Testis (tissue), 5 donors: ENCODE measurements at regions of chr19 and their contacts with region 1.

Region 1: DNA sequence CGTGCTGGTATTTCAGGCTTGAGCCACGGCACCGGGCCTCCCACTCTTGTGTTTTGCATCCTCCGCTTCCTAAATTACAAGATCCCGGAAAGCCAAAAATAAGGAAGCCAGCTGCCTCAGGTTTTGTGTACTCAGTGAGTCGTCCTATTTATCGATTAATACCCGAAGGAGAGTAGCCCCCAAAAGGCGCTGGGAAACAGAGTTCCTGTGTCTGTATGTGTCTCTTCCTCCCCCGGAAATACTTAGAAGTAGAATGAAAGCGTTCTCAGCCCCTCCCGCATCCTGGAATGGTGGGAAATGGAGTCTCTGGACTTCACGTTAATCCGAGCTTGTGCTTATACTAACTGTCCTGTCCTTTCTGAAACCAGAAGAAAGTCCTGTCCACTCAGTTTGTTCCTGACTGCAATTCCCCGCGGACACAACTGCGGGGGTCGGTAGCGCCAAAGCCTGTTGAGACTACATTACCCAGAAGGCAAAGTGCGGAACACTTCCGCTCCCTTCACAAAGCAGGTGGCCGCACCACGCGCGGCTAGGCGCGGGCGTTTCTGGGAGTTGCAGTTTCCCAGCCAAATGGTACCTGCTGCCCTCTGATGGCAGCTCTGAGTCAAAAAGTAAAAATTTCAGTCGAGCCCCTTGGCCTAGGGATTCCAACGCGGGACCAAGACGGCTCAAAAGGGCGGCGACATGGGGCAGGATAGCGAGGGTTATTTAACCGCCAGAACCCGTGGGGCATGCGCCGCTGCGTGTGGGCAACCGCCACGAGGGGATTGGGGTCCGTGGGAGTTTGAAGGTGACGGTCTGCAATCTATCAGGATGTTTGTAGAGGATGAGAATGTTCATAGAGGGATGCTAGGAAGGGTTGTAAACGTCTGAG is 2.2 kb upstream of the GSK3A start:
- DNase-seq: peak; percentile 97
- H3K4me3 ChIP-seq: peak overlapping the region; percentile 76 to 94
- H3K27ac ChIP-seq: peak overlapping the region; percentile 55 to 90
- H3K4me1 ChIP-seq: peaks cover 60% of the 10 kb centered on the region
- H3K27me3 ChIP-seq: no peaks in the 10 kb centered on the region
- CTCF ChIP-seq: peak; percentile 61 to 78 (median 67)
- POLR2A ChIP-seq: no peak

Region 2: DNA sequence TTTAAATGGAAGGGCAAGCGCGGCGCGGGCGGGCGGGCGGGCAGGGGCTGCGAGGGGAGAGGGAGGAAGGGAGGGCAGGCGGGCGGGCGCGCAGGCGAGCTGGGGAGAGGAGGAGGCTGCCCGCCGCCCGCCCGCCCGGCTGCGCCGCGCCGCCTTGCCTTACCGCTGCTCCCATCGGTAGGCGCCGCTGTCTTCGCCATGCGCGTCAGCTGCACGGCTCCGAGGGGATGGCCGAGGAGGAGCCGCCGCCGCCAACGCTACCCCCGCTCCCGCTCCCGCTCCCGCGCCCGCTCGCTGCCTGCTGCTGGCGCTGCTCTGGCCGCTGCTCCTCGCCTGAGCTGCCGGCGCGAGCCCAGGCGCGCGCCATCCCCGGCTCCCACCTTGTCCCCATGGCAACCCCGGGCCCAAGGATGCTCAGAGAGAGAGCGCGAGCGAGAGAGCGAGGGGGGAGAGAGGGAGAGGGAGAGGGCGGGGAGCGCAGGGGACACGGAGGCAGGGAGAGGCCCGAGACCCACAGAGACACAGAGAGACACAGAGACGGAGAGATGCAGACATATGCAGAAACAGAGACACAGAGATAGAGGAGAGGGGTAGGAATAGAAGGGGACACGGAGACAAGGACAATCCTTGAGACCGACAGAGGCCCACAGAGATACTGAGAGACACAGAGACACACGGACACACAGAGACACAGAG is 67.4 kb before region 1 on chr19:
- intact Hi-C with region 1: no loop called
- DNase-seq: peak; percentile 71
- H3K4me3 ChIP-seq: peak overlapping the region; percentile 39 to 41
- H3K27ac ChIP-seq: no peak overlapping the region
- H3K4me1 ChIP-seq: peaks cover 10% of the 10 kb centered on the region
- H3K27me3 ChIP-seq: no peaks in the 10 kb centered on the region
- CTCF ChIP-seq: peak in 1 of 3 experiments; percentile 32
- POLR2A ChIP-seq: no peak

Region 3: GRCh38 chr19:42290523-42291438 is 46.2 kb after region 1 on chr19:
- intact Hi-C with region 1: loop called (anchors 5 kb)
- DNase-seq: no peak
- H3K4me3 ChIP-seq: no peak overlapping the region
- H3K27ac ChIP-seq: no peak overlapping the region
- H3K4me1 ChIP-seq: peaks cover 12% of the 10 kb centered on the region
- H3K27me3 ChIP-seq: no peaks in the 10 kb centered on the region
- CTCF ChIP-seq: peak; percentile 25 to 40 (median 29)
- POLR2A ChIP-seq: no peak

Region 4: DNA sequence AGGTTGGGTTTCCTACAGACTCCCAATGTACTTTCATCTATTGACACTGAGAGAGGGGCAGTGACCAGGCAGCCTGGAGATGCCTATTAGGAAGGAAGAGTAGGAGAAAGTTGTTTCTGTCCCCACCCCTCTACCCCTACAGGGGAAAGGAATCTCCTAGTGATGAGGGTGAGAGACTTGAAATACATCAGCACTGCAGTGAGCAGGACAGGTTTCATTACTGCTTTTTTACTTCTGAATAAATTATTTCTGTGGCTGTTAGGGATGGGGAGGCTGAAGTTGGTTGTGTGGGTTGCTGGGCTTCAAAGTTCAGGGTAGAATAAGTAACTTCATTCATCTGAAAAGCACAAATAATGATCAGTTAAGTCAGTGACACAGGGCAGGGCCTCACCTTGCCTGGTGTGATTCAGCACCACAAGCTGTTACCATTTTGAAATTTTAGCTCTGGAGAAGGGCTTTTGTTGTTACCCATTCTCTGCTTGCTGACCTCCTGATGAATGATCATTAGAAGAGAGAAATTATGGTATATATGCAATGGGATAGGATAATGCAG is 264.4 kb after region 1 on chr19:
- intact Hi-C with region 1: no loop called
- DNase-seq: no peak
- H3K4me3 ChIP-seq: no peak overlapping the region
- H3K27ac ChIP-seq: no peak overlapping the region
- H3K4me1 ChIP-seq: no peaks in the 10 kb centered on the region
- H3K27me3 ChIP-seq: no peaks in the 10 kb centered on the region
- CTCF ChIP-seq: no peak
- POLR2A ChIP-seq: no peak